ENCODE measurements at regions of chr6 and their contacts with region 1.

Region 1: GRCh38 chr6:115969930-115970273 is 90.8 kb downstream of the FRK start:
- DNase-seq: no peak

Region 2: GRCh38 chr6:115796829-115797228 is 173.1 kb before region 1 on chr6:
- intact Hi-C with region 1: no loop called
- DNase-seq: no peak

Region 3: GRCh38 chr6:116010790-116011401 is 41.0 kb after region 1 on chr6:
- intact Hi-C with region 1: loop called (anchors 5 kb)
- DNase-seq: peak; percentile 33 to 95 (median 74)

Measured in posterior cingulate gyrus (tissue), 11 donors.